Right ventricle myocardium inferior (tissue), 1 donor: ENCODE measurements at regions of chr1 and their contacts with region 1.

Region 1: GRCh38 chr1:11868331-11868955 is 9.7 kb upstream of the NPPB start:
- DNase-seq: no peak
- ATAC-seq: no peak

Region 2: DNA sequence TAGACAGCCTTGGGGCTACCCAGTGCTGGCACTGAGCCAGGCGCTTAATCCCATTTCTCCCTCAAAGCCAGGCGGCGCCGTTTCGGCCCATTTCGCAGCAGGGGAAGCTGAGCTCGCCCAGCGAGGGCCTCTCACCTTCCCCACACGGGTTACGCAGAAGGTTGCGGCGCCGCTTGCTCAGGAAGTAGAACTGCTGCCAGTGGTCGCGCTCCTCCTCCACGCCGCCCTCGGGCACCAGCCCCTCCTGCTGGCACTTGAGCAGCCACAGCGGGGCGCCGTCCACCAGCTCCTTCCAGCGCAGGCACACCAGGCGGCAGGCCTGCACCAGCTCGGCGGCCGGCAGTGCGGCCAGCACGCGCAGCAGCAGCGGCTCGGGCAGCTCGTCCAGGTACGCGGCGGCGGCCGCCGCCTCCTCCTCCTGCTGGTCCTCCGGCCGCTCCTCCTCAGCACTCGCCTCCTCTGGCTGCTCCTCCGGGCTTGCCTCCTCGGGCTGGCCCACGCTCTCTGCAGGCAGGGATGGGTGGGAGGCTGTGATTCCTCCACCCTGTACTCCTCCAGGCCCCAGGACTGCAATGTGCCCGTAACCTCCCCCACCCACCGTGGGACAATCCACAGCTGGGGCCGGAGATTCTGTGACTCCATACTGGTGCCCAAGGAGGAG is 218.0 kb before region 1 on chr1:
- intact Hi-C with region 1: no loop called
- DNase-seq: peak; percentile 88
- ATAC-seq: peak; percentile 73

Region 3: GRCh38 chr1:11893907-11894251 is 25.4 kb after region 1 on chr1:
- intact Hi-C with region 1: loop called (anchors 2 kb)
- DNase-seq: peak; percentile 88
- ATAC-seq: peak; percentile 92

Region 4: DNA sequence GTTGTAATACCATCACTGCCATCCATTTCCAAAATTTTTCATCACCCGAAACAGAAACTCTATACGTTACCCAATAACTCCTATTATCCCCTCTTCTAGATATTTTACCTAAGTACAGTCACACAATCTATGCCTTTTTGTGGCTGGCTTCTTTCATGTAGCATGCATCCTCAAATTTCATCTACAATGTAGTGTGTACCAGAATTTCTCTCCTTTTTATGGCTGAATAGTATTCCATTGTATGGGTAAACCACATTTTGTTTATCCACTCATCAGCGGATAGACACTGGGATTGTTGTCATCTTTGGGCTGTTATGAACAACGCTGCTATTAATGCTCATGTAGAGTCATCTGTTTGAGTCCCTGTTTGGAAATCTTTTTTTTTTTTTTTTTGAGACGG is 36.5 kb after region 1 on chr1:
- intact Hi-C with region 1: no loop called
- DNase-seq: no peak
- ATAC-seq: no peak